ENCODE measurements at regions of chr18 and their contacts with region 1.

Region 1: GRCh38 chr18:54269893-54270844 is 852 bp downstream of the POLI start:
- DNase-seq: peak in 8 of 9 donors; percentile 2 to 60 (median 30)
- ATAC-seq: peak; percentile 26
- H3K4me3 ChIP-seq: peak overlapping the region; percentile 94
- H3K4me3 Mint-ChIP-seq: peak overlapping the region; percentile 82 to 97 (median 91)
- H3K27ac ChIP-seq: peak overlapping the region; percentile 85
- H3K27ac Mint-ChIP-seq: peak overlapping the region; percentile 71 to 96 (median 94)
- H3K4me1 ChIP-seq: peaks cover 16 to 17% of the 10 kb centered on the region in 2 donors
- H3K4me1 Mint-ChIP-seq: peaks cover 5 to 45% (median 22%) of the 10 kb centered on the region in 7 donors
- H3K27me3 ChIP-seq: no peaks in the 10 kb centered on the region
- H3K27me3 Mint-ChIP-seq: no peaks in the 10 kb centered on the region

Region 2: GRCh38 chr18:53864770-53865169 is 405.4 kb before region 1 on chr18:
- CTCF ChIA-PET with region 1: no interaction called
- POLR2A ChIA-PET with region 1: no interaction called
- intact Hi-C with region 1: no loop called
- DNase-seq: no peak
- ATAC-seq: no peak
- H3K4me3 ChIP-seq: no peak overlapping the region
- H3K4me3 Mint-ChIP-seq: no peak overlapping the region
- H3K27ac ChIP-seq: no peak overlapping the region
- H3K27ac Mint-ChIP-seq: no peak overlapping the region
- H3K4me1 ChIP-seq: no peaks in the 10 kb centered on the region
- H3K4me1 Mint-ChIP-seq: no peaks in the 10 kb centered on the region
- H3K27me3 ChIP-seq: no peaks in the 10 kb centered on the region
- H3K27me3 Mint-ChIP-seq: peaks cover 0 to 5% (median 0%) of the 10 kb centered on the region in 5 donors

Region 3: DNA sequence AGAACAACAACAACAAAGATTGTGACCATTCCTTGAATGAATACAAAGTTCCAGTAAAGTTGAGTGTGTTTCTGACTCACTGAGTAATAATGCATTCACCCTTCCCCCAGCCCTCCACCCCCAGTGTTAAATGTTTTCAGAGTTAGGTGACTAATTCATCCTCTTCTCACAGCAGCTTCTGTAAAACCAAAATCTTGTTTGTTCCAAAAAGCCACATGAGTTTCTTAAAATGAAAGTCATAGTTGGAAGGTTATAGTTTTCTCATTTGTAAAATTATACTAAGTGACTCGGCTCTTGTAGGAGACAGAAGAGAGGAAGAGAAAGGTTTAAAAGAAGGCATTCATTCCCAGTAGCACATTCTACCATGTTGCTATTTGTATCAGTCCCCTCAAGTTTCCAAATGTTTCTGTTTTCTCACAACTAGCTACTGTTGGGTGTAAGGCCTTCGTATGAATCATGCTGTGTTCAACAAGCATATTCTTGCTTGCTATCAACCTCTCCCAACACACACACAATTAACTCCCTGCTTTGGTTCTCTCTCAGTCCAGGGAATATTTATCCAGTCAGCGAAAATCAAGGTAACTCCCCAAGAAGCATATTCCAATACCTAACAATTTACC is 121.0 kb before region 1 on chr18:
- CTCF ChIA-PET with region 1: no interaction called
- POLR2A ChIA-PET with region 1: no interaction called
- intact Hi-C with region 1: loop called in 1 of 2 experiments (anchors 2 kb)
- DNase-seq: peak in 1 of 9 donors; percentile 48
- ATAC-seq: no peak
- H3K4me3 ChIP-seq: no peak overlapping the region
- H3K4me3 Mint-ChIP-seq: peak overlapping the region in 2 of 10 donors; percentile 30 to 60
- H3K27ac ChIP-seq: no peak overlapping the region
- H3K27ac Mint-ChIP-seq: peak overlapping the region in 6 of 9 donors; percentile 5 to 91 (median 53)
- H3K4me1 ChIP-seq: no peaks in the 10 kb centered on the region
- H3K4me1 Mint-ChIP-seq: peaks cover 0 to 44% (median 8%) of the 10 kb centered on the region in 7 donors
- H3K27me3 ChIP-seq: no peaks in the 10 kb centered on the region
- H3K27me3 Mint-ChIP-seq: no peaks in the 10 kb centered on the region

Region 4: DNA sequence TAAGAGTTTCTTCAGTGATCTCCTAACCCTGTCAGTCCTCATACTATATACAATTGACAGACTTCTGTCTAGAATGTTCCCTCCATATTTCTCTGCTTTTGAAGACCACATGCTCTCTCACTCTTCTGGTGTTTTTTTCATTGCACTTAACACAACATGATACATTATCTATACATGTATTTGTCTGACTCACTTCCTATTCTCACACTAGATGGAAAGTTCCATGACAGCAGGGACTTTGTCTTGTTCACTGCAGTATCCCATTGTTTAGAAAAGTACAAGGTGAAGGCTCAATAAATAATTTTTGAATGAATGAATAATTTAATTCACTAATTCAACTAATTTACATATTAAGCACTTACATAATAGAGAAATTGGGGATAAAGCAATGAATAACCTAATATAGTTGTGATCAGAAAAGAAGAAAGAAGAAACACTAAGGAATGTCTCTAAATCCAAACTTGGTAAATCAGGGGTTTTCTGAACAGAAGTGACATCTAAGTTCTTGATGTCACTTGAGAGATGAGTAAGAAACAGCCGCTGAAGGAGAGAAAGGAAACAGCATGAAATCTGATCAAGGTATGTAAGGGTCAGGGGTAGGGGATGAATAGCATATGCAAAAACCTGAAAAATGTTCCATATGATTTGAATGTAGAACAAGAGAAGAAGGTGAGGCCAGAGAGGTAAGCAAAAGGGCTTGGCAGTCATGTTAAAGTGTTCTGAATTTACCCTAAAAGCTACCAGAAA is 88.1 kb before region 1 on chr18:
- CTCF ChIA-PET with region 1: no interaction called
- POLR2A ChIA-PET with region 1: interaction called, 3 read pairs
- intact Hi-C with region 1: loop called in 1 of 2 experiments (anchors 5 kb)
- DNase-seq: no peak
- ATAC-seq: no peak
- H3K4me3 ChIP-seq: no peak overlapping the region
- H3K4me3 Mint-ChIP-seq: no peak overlapping the region
- H3K27ac ChIP-seq: no peak overlapping the region
- H3K27ac Mint-ChIP-seq: no peak overlapping the region
- H3K4me1 ChIP-seq: no peaks in the 10 kb centered on the region
- H3K4me1 Mint-ChIP-seq: peaks cover under 1 to 9% (median 4%) of the 10 kb centered on the region in 7 donors
- H3K27me3 ChIP-seq: no peaks in the 10 kb centered on the region
- H3K27me3 Mint-ChIP-seq: no peaks in the 10 kb centered on the region

Region 5: DNA sequence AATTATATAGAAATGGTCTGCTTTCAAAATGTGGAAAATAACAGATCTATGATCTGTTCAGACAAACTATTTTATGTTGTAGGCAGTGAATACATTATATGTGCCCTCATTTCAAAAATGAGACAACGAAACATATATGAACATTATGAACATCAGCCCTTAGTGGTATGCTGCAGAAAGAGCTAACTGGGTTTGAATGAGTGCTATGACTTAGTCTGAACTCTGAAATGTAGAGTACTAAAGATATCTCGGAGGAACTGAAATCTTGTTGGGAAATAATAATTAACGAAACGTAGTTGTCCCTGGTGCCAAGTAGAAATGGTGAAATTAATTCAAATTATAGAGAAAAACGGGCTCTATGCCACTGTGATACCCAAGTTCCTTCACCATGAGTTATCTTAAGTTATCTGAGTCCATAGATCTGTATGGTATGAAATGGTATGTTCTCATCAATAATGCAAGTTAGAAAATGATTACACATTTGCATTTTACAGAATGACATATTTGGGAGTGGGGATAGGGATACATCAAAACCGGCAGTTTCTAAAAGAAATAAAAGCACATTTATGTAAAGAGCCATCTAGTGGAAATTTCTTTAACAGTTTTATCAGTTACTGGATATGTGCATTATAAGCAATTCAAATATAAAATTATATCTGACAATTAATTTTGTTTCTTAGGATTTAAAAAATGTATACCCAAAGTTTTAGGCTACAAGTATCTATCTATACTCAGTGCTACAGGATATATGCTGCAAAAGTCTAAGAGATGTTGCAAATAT is 60.8 kb after region 1 on chr18:
- CTCF ChIA-PET with region 1: no interaction called
- POLR2A ChIA-PET with region 1: no interaction called
- intact Hi-C with region 1: no loop called
- DNase-seq: no peak
- ATAC-seq: no peak
- H3K4me3 ChIP-seq: no peak overlapping the region
- H3K4me3 Mint-ChIP-seq: no peak overlapping the region
- H3K27ac ChIP-seq: no peak overlapping the region
- H3K27ac Mint-ChIP-seq: no peak overlapping the region
- H3K4me1 ChIP-seq: no peaks in the 10 kb centered on the region
- H3K4me1 Mint-ChIP-seq: no peaks in the 10 kb centered on the region
- H3K27me3 ChIP-seq: no peaks in the 10 kb centered on the region
- H3K27me3 Mint-ChIP-seq: peaks cover 9 to 17% (median 10%) of the 10 kb centered on the region in 5 donors

Region 6: GRCh38 chr18:54357660-54358494 is 87.7 kb after region 1 on chr18 and contains the starts of genes C18orf54 and STARD6:
- CTCF ChIA-PET with region 1: no interaction called
- POLR2A ChIA-PET with region 1: interaction called, 4 read pairs
- intact Hi-C with region 1: loop called (anchors 1 kb)
- DNase-seq: peak; percentile 82 to 93 (median 91)
- ATAC-seq: peak; percentile 96
- H3K4me3 ChIP-seq: peak within 1 kb of the TSS; percentile 88
- H3K4me3 Mint-ChIP-seq: peak within 1 kb of the TSS; percentile 93 to 99 (median 97)
- H3K27ac ChIP-seq: peak within 1 kb of the TSS; percentile 60
- H3K27ac Mint-ChIP-seq: peak within 1 kb of the TSS; percentile 74 to 99 (median 91)
- H3K4me1 ChIP-seq: peaks cover 4 to 7% of the 10 kb centered on the region in 2 donors
- H3K4me1 Mint-ChIP-seq: peaks cover 6 to 32% (median 21%) of the 10 kb centered on the region in 7 donors
- H3K27me3 ChIP-seq: no peaks in the 10 kb centered on the region
- H3K27me3 Mint-ChIP-seq: peaks cover 0 to 12% (median 5%) of the 10 kb centered on the region in 5 donors
- total RNA-seq, gene C18orf54: 0.77 to 8.3 (median 3.6) TPM
- total RNA-seq, gene STARD6: not detected

Measured in naive thymus-derived CD4-positive, alpha-beta T cell (primary cell).